WTC11 (cell line): ENCODE measurements at regions of chr10 and their contacts with region 1.

Region 1: GRCh38 chr10:84429926-84430520 is 101.6 kb downstream of the CCSER2 start:
- DNase-seq: peak; percentile 89
- ATAC-seq: peak; percentile 99
- H3K4me3 Mint-ChIP-seq: no peak overlapping the region
- H3K27ac Mint-ChIP-seq: peak overlapping the region; percentile 71; the same call in 1 of the 2 replicates
- H3K4me1 Mint-ChIP-seq: peaks cover 7% of the 10 kb centered on the region
- H3K27me3 Mint-ChIP-seq: no peaks in the 10 kb centered on the region
- CTCF ChIP-seq: peak; percentile 72

Region 2: DNA sequence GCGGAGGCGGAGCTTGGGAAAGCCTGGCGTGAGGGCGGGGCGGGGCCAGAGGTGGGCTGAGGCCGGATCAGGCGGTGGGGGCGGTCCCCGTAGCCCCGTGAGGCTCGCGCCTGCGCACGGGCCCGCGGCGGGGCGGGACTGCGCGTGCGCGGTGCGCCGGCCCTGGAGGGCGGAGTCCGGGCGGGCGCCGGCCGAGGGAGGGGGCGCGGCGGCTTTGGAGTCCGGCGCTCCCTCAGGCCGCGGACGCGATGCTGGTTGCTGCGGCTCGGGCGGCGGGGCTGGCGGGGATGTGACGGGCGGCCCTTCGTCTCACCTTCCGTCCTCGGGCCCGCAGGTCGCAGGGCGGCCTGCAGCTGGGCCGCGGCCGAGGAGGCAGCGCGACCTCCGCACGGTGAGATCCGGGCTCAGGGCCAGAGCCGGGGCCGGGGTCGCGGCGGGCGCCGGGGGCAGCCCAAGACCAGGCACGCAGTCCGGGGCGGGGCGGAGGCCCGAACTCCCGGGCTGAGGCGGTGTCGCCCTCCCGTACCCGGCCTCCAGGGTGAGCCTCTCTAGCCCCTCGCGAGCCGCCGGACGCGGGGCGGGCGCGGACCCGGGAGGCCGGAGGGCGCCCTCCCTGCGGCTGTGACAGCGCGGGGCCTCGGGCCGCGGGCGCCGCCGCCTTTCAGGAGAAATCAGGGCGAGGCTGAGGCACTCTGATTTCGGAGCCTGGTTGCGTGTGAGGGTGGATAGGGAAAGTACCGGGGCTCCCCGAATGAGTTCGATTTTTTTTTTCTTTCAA is 101.4 kb before region 1 on chr10 and contains the start of gene CCSER2:
- CTCF ChIA-PET with region 1: interaction called, 10 read pairs
- POLR2A ChIA-PET with region 1: no interaction called
- DNase-seq: peak; percentile 99
- ATAC-seq: peak; percentile 91
- H3K4me3 Mint-ChIP-seq: peak within 1 kb of the TSS; percentile 96
- H3K27ac Mint-ChIP-seq: peak within 1 kb of the TSS; percentile 99
- H3K4me1 Mint-ChIP-seq: peaks cover 37% of the 10 kb centered on the region
- H3K27me3 Mint-ChIP-seq: no peaks in the 10 kb centered on the region
- CTCF ChIP-seq: no peak
- total RNA-seq, gene CCSER2: 21.4 to 30.6 TPM (median 22.7 TPM) in 3 replicates

Region 3: DNA sequence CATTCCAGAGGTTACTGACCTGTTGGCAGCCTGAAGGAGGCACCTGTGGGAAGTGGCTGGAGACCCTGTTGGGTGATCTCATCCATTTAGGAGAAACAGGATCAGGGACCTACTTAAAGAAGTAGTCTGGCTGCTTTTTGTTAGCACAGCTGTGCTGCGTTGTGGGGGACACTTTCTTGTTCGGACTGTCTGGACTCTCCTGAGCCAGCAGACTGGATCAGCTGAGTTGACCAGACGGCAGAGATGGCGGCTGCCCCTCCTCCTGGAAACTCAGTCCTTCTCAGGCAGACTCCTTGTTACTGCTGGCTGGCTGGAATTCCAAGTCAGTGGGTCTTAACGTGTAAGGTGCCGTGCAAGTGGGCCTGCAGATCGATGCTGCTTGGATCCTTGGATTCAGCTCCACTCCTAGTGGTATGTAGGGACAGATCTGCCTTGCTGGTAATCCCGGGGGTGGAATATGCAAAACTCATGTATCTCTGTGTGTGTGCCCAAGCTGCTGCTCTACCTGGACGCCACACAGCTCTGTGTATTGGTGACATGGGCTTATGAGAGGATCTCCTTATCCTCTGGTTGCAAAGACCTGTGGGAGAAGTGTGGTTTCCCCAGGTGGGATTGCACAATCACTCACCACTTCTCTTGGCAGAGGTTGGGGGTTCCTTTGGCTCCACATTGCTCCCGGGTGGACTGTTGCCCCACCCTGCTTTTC is 14.3 kb before region 1 on chr10:
- CTCF ChIA-PET with region 1: interaction called, 11 read pairs
- POLR2A ChIA-PET with region 1: no interaction called
- DNase-seq: no peak
- ATAC-seq: no peak
- H3K4me3 Mint-ChIP-seq: no peak overlapping the region
- H3K27ac Mint-ChIP-seq: no peak overlapping the region; the same call in 1 of the 2 replicates
- H3K4me1 Mint-ChIP-seq: peaks cover 8% of the 10 kb centered on the region; the same call in 1 of the 2 replicates
- H3K27me3 Mint-ChIP-seq: no peaks in the 10 kb centered on the region
- CTCF ChIP-seq: no peak

Region 4: DNA sequence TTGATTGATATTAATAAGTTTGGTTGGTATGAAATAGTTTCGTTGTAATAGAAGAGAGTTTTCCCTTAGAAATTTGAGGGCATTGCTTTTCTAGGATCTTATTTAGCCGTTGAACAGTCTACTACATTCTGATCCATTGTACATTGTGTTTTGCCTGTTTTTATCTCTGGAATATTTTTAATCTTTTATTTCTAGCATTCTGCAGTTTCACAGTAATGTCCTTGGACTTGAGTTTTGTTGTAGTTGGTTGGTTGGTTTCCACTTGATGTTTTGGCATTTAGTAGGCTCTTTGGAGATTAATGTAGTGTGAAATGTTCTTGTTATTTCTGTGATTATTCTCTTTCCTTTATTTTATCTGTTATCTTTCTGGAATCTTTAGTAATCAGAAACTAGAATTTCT is 10.8 kb after region 1 on chr10:
- CTCF ChIA-PET with region 1: interaction called, 10 read pairs
- POLR2A ChIA-PET with region 1: no interaction called
- DNase-seq: no peak
- ATAC-seq: no peak
- H3K4me3 Mint-ChIP-seq: no peak overlapping the region
- H3K27ac Mint-ChIP-seq: no peak overlapping the region
- H3K4me1 Mint-ChIP-seq: no peaks in the 10 kb centered on the region
- H3K27me3 Mint-ChIP-seq: no peaks in the 10 kb centered on the region
- CTCF ChIP-seq: no peak

Region 5: GRCh38 chr10:84523526-84523925 is 93.5 kb after region 1 on chr10:
- CTCF ChIA-PET with region 1: interaction called, 16 read pairs
- POLR2A ChIA-PET with region 1: no interaction called
- DNase-seq: no peak
- ATAC-seq: peak; percentile 27; the same call in 1 of the 2 replicates
- H3K4me3 Mint-ChIP-seq: no peak overlapping the region
- H3K27ac Mint-ChIP-seq: no peak overlapping the region; the same call in 1 of the 2 replicates
- H3K4me1 Mint-ChIP-seq: peaks cover 36% of the 10 kb centered on the region
- H3K27me3 Mint-ChIP-seq: peaks cover 9% of the 10 kb centered on the region
- CTCF ChIP-seq: no peak